ENCODE measurements at regions of chr17 and their contacts with region 1.

Region 1: DNA sequence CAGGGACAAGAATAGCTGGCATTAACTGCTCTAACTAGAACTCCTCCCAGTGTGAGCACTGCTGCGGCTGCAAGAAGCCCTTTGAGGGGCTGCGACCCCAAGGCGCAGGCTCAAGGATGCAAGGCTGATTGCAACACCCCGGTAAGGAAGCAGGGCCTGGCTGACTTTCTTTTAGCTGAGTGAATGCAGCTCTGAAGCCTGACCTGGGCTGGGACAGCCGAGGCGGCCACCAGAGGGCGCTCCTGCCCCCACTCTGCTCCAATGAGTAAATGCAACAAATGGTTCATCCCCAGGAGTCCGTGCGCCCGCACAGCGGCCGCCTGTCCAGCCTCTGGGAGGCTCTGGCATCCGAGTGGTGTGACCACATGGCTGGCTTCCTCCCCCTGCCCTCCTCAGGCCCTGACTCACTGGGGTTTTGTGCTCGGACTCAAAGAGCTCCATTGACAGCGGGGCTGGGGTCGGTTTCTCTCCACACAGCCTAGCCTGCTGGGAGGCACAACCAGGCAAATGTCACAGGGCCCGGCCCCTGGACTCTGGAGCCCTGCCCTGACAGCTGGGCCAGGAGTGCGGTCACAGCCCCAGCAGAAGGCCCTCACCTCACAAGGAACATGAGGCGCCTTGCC is at the start of gene SMIM5:
- DNase-seq: peak; percentile 88
- ATAC-seq: peak; percentile 89
- H3K4me3 Mint-ChIP-seq: no peak within 1 kb of the TSS
- H3K27ac Mint-ChIP-seq: no peak within 1 kb of the TSS
- H3K4me1 Mint-ChIP-seq: no peaks in the 10 kb centered on the region
- H3K27me3 Mint-ChIP-seq: no peaks in the 10 kb centered on the region
- total RNA-seq, gene SMIM5: 0.31 TPM in 1 of 2 experiments, not detected in the other

Region 2: GRCh38 chr17:75607086-75607485 is 25.9 kb before region 1 on chr17:
- CTCF ChIA-PET with region 1: interaction called, 15 read pairs
- POLR2A ChIA-PET with region 1: no interaction called
- DNase-seq: no peak
- ATAC-seq: no peak
- H3K4me3 Mint-ChIP-seq: no peak overlapping the region
- H3K27ac Mint-ChIP-seq: no peak overlapping the region
- H3K4me1 Mint-ChIP-seq: peaks cover 5% of the 10 kb centered on the region
- H3K27me3 Mint-ChIP-seq: no peaks in the 10 kb centered on the region

Region 3: GRCh38 chr17:75645889-75646637 is 13.1 kb after region 1 on chr17:
- CTCF ChIA-PET with region 1: interaction called, 134 read pairs
- POLR2A ChIA-PET with region 1: interaction called, 3 read pairs
- DNase-seq: peak; percentile 53
- ATAC-seq: peak; percentile 90
- H3K4me3 Mint-ChIP-seq: no peak overlapping the region
- H3K27ac Mint-ChIP-seq: peak overlapping the region; percentile 87
- H3K4me1 Mint-ChIP-seq: peaks cover 25% of the 10 kb centered on the region
- H3K27me3 Mint-ChIP-seq: no peaks in the 10 kb centered on the region

Region 4: GRCh38 chr17:75667021-75667790 is 34.2 kb after region 1 on chr17 and contains the starts of genes RECQL5 and SAP30BP:
- CTCF ChIA-PET with region 1: interaction called, 23 read pairs
- POLR2A ChIA-PET with region 1: interaction called, 10 read pairs
- DNase-seq: peak; percentile 99
- ATAC-seq: peak; percentile 100
- H3K4me3 Mint-ChIP-seq: peak within 1 kb of the TSS; percentile 63
- H3K27ac Mint-ChIP-seq: peak within 1 kb of the TSS; percentile 79
- H3K4me1 Mint-ChIP-seq: peaks cover 31% of the 10 kb centered on the region
- H3K27me3 Mint-ChIP-seq: no peaks in the 10 kb centered on the region
- total RNA-seq, gene RECQL5: 37.6 to 43.9 TPM
- total RNA-seq, gene SAP30BP: 88.7 to 93.7 TPM

Region 5: GRCh38 chr17:75679706-75680442 is 46.9 kb after region 1 on chr17:
- CTCF ChIA-PET with region 1: interaction called, 10 read pairs
- POLR2A ChIA-PET with region 1: no interaction called
- DNase-seq: no peak
- ATAC-seq: no peak
- H3K4me3 Mint-ChIP-seq: no peak overlapping the region
- H3K27ac Mint-ChIP-seq: no peak overlapping the region
- H3K4me1 Mint-ChIP-seq: peaks cover 6% of the 10 kb centered on the region
- H3K27me3 Mint-ChIP-seq: no peaks in the 10 kb centered on the region

Region 6: GRCh38 chr17:75731716-75732498 is 98.9 kb after region 1 on chr17:
- CTCF ChIA-PET with region 1: interaction called, 13 read pairs
- POLR2A ChIA-PET with region 1: no interaction called
- DNase-seq: no peak
- ATAC-seq: no peak
- H3K4me3 Mint-ChIP-seq: no peak overlapping the region
- H3K27ac Mint-ChIP-seq: no peak overlapping the region
- H3K4me1 Mint-ChIP-seq: peaks cover 2% of the 10 kb centered on the region
- H3K27me3 Mint-ChIP-seq: no peaks in the 10 kb centered on the region

Measured in activated CD8-positive, alpha-beta T cell treated with anti-CD3 and anti-CD28 coated beads, Interleukin-2, amount 10 ng/mL, durations not matched to agents 7 days and 5 days (primary cell).